B cell (primary cell): ENCODE measurements at regions of chr19 and their contacts with region 1.

Region 1: GRCh38 chr19:36837906-36838783 is at the start of gene ZNF790:
- DNase-seq: peak; percentile 94
- ATAC-seq: peak; percentile 90
- H3K4me3 ChIP-seq: peak within 1 kb of the TSS; percentile 79 to 90 (median 83)
- H3K4me3 Mint-ChIP-seq: no peak within 1 kb of the TSS
- H3K27ac ChIP-seq: peak within 1 kb of the TSS; percentile 84 to 89
- H3K27ac Mint-ChIP-seq: no peak within 1 kb of the TSS
- H3K4me1 ChIP-seq: peaks cover 10 to 18% of the 10 kb centered on the region in 2 donors
- H3K4me1 Mint-ChIP-seq: no peaks in the 10 kb centered on the region
- H3K27me3 ChIP-seq: no peaks in the 10 kb centered on the region
- H3K27me3 Mint-ChIP-seq: no peaks in the 10 kb centered on the region
- CTCF ChIP-seq: no peak
- total RNA-seq, gene ZNF790: 14.8 and 15.1 TPM in 2 replicates

Region 2: GRCh38 chr19:36627057-36627456 is 211.1 kb before region 1 on chr19:
- CTCF ChIA-PET with region 1: no interaction called
- POLR2A ChIA-PET with region 1: no interaction called
- intact Hi-C with region 1: no loop called
- DNase-seq: no peak
- ATAC-seq: no peak
- H3K4me3 ChIP-seq: no peak overlapping the region
- H3K4me3 Mint-ChIP-seq: no peak overlapping the region
- H3K27ac ChIP-seq: no peak overlapping the region
- H3K27ac Mint-ChIP-seq: no peak overlapping the region
- H3K4me1 ChIP-seq: no peaks in the 10 kb centered on the region
- H3K4me1 Mint-ChIP-seq: no peaks in the 10 kb centered on the region
- H3K27me3 ChIP-seq: no peaks in the 10 kb centered on the region
- H3K27me3 Mint-ChIP-seq: no peaks in the 10 kb centered on the region
- CTCF ChIP-seq: no peak

Region 3: DNA sequence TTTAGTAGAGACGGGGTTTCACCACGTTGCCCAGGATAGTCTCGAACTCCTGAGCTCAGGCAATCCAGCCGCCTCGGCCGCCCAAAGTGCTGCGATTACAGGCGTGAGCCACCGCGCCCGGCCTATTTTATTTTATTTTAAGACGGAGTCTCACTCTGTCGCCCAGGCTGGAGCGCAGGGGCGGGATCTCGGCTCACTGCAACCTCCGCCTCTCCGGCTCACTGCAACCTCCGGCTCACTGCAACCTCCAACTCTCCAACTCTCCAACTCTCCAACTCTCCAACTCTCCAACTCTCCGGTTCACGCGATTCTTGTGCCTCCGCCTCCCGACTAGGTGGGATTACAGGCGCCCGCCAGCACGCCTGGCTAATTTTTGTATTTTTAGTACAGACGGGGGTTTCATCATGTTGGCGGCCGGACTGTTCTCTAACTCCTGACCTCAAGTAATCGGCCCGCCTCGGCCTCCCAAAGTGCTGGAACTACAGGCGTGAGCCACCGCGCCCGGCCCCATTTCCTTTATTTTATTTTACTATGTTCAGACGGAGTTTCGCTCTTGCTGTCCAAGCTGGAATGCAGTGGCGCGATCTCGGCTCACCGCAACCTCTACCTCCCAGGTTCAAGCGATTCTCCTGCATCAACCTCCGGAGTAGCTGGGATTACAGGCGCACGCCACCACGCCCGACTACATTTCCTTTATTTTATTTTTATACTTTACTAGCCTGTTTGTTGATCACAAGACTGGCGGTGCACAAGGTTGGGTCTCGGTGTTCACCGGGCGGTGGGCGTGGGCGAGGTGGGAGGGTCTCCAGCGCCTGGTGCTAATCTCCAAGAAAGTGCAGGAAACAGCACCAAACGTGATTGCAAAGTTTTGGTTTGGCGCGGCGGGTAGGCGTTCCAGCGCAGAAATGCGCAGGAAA is 41.8 kb before region 1 on chr19:
- CTCF ChIA-PET with region 1: no interaction called
- POLR2A ChIA-PET with region 1: interaction called, 12 read pairs
- intact Hi-C with region 1: loop called (anchors 1 kb)
- DNase-seq: no peak
- ATAC-seq: no peak
- H3K4me3 ChIP-seq: peak overlapping the region; percentile 63 to 91 (median 84)
- H3K4me3 Mint-ChIP-seq: peak overlapping the region; percentile 95
- H3K27ac ChIP-seq: peak overlapping the region; percentile 86 to 90
- H3K27ac Mint-ChIP-seq: peak overlapping the region; percentile 99
- H3K4me1 ChIP-seq: peaks cover 0 to 17% of the 10 kb centered on the region in 2 donors
- H3K4me1 Mint-ChIP-seq: peaks cover 25% of the 10 kb centered on the region
- H3K27me3 ChIP-seq: peaks cover 0 to 6% (median 0%) of the 10 kb centered on the region in 4 experiments
- H3K27me3 Mint-ChIP-seq: peaks cover 7% of the 10 kb centered on the region
- CTCF ChIP-seq: no peak